Sigmoid colon (tissue), 7 donors: ENCODE measurements at regions of chr19 and their contacts with region 1.

Region 1: GRCh38 chr19:1438035-1438932 is at the start of gene RPS15:
- DNase-seq: peak; percentile 97
- H3K4me3 ChIP-seq: peak within 1 kb of the TSS; percentile 70 to 99 (median 82)
- H3K27ac ChIP-seq: peak within 1 kb of the TSS; percentile 85 to 91 (median 88)
- H3K4me1 ChIP-seq: peaks cover 0 to 31% (median 27%) of the 10 kb centered on the region in 4 donors
- H3K27me3 ChIP-seq: no peaks in the 10 kb centered on the region
- CTCF ChIP-seq: peak; percentile 74 to 95 (median 90)
- EP300 ChIP-seq: no peak
- POLR2A ChIP-seq: peak; percentile 89 to 90
- total RNA-seq, gene RPS15: 3,601 to 5,641 (median 3,840) TPM

Region 2: DNA sequence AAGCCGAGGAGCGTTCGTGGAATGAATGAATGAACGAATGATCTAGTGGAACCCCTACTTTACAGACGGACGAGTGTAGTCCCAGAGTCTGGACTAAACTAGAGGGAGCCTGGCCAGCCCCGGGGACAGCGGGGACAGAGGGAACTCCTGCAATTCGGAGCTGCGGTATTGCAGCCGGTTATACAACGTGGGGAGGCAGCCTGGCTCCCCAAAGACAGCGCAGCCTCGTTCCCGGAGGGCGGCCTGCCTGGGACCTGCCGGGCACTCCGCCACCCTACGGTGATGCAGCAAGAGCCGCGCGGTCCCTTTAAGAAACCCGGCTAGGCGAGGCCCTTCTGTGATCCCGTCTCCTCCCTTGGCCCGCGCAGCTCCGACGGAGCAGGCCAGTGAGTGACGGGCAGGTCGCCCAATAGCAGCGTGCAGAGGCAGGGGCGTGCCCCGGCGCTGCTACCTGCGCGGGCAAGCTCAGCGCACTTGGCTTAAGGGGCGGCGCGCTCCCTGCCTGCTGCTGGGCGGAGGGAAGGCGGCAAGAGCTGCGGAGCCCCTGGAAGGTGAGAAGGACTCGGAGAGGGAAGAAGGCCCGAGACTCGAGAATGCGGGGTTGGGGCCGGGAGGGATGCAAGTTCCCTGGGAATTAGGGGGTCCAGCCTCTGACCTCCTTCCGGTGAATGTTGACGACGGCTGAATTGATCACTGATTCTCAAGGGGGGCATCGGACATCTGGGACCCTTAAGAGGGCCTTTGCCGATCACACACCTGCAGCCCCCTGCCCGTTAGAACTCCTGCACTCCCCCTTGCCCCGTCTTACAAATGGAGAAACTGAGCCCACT is 398.4 kb before region 1 on chr19 and contains the start of gene ABCA7:
- intact Hi-C with region 1: loop called (anchors 5 kb)
- DNase-seq: peak; percentile 99
- H3K4me3 ChIP-seq: peak within 1 kb of the TSS; percentile 19 to 57 (median 46)
- H3K27ac ChIP-seq: peak within 1 kb of the TSS; percentile 49 to 66 (median 64)
- H3K4me1 ChIP-seq: peaks cover 0 to 35% (median 31%) of the 10 kb centered on the region in 4 donors
- H3K27me3 ChIP-seq: peaks cover 0 to 20% (median 10%) of the 10 kb centered on the region in 3 donors
- CTCF ChIP-seq: no peak
- EP300 ChIP-seq: no peak
- POLR2A ChIP-seq: peak; percentile 7 to 60
- total RNA-seq, gene ABCA7: 3.8 to 20.5 (median 10.9) TPM